Posterior vena cava (tissue), 2 donors: ENCODE measurements at regions of chr11 and their contacts with region 1.

Region 1: DNA sequence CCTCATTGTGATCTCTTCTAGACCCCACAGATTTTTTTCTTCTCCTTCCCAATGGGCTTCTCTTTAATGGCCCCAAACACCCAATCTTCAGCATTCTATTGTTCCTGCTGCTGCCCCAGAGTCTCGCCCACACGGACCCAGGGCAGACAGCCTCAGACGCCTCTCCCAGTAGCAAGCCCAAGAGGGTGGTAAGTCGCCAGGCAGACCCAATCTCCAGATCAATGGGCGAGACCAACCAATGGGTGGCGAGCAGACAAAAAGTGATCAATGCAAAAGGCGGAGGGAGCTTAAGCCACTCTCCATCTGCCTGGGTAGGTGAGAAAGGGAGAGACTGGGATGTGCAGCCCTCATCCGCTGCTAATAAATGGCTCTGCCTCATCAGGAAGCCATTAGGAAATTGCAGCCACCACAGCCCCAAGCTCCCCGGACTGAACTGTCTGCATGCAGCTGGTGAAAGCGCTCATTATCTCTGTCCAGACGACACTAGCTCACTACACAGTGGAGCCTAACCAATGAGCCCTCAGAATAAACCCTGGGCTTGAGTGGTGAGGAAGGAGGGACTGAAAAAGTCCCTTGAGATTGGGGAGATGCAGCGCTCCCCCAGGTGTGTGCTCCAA is 81.8 kb downstream of the ETS1 start:
- DNase-seq: no peak

Region 2: GRCh38 chr11:127275774-127276173 is 1229.8 kb before region 1 on chr11:
- intact Hi-C with region 1: no loop called
- DNase-seq: no peak

Region 3: GRCh38 chr11:127362754-127363153 is 1142.8 kb before region 1 on chr11:
- intact Hi-C with region 1: no loop called
- DNase-seq: no peak

Region 4: DNA sequence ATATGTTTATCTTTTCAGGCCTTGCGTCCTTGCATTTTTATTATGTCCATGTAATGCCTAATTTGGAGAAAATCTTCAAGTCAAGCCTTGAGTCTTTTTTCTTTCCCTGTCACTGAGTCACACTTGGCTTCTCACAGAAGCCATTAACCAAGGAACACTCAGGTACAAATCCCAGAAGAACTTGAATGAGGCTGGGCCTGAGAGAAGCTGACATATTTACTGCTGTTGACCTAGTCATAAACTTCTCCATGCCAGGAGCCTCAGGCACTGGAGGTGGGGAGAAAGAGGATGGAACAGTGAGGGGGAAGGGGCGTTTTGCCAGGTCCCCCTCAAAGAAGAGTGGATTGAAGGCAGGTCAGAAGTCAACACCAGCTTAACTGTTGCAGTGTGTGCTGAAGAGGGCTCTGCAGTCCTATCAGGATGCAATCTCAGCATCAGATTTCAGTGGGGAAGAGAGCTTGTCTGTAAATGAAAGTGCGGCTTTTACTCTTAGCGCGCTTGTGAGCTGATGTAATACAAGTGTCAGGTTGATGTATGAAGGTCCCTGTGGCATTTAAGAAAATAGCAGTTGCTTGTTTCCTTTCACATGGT is 444.2 kb before region 1 on chr11:
- intact Hi-C with region 1: no loop called
- DNase-seq: no peak

Region 5: DNA sequence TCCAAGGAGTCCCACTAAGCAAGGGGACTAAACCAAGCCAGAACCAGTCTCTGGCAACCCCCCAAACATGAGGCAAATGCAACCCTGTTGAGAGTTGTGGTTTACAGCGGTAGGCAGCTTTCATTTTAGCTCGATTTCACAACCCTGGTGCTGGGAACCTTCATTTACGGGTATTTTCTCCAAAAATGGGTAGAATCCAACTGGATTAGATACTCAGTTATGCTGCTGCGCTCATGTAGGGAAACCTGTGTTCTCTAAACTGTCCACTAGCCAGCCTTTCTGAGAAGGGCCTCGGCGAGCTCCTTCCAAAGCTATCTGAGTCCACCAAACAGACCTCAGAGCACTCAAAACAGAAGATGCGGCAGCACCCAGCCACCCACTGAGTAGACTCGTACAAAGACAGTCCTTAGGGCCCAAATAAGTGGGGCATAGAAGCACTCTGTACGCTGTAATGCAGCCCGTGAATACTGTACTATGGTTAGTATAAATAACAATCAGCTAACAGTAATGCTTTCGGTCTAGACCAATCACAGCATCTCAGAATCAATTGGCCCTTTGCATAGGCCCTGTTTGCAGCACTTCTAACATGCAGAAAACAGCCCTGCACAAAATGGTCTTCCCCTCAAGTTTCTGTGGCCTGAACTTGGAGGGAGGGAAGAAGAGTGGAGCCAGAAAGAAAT is 22.9 kb before region 1 on chr11:
- intact Hi-C with region 1: loop called in 1 of 2 experiments (anchors 1 kb)
- DNase-seq: no peak